ENCODE measurements at regions of chr4 and their contacts with region 1.

Region 1: GRCh38 chr4:83535520-83536361 is at the start of gene GPAT3:
- DNase-seq: peak; percentile 77 to 84
- ATAC-seq: peak; percentile 83 to 96 (median 89)
- H3K4me3 ChIP-seq: peak within 1 kb of the TSS; percentile 51 to 86 (median 74)
- H3K27ac ChIP-seq: peak within 1 kb of the TSS; percentile 68 to 96 (median 90)
- H3K4me1 ChIP-seq: peaks cover 0 to 31% (median 13%) of the 10 kb centered on the region in 9 donors
- H3K27me3 ChIP-seq: peaks cover 0 to 35% (median 6%) of the 10 kb centered on the region in 7 donors
- CTCF ChIP-seq: no peak
- total RNA-seq, gene GPAT3: 34.2 to 82.6 (median 52.8) TPM

Region 2: DNA sequence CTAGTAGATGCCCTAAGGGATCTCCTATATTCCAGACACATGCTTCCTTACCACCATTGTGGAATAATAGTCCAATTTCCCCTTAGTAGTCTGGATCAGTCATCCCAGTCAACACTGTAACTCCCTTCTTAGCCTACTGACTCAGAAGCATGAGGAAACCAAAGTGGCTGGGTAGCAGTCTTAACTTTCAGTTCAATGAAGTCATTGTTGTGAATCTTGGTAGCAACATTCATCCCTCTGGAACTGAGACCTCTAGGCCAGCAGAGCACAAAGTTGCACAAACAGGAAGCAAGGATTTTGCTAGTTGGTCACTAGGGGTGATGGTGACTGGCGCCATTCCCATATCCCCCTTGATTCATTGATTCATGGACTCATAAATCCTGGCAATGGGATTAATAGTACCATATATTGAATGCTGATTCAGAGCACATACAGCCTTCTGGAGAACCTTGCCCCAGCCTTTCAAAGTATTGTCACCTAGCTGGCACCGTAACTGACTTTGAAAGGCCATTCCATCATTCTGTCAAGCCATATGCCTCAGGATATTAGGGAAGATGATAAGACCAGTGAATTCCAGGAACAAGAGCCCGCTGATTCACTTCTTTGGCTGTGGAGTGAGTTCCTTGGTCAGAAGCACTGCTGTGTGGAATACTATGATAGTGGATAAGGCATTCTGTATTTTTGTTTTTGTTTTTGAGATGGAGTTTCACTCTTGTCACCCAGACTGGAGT is 19.5 kb before region 1 on chr4:
- intact Hi-C with region 1: no loop called
- DNase-seq: no peak
- ATAC-seq: peak in 2 of 8 donors; percentile 12 to 72
- H3K4me3 ChIP-seq: no peak overlapping the region
- H3K27ac ChIP-seq: no peak overlapping the region
- H3K4me1 ChIP-seq: no peaks in the 10 kb centered on the region
- H3K27me3 ChIP-seq: no peaks in the 10 kb centered on the region
- CTCF ChIP-seq: no peak

Region 3: DNA sequence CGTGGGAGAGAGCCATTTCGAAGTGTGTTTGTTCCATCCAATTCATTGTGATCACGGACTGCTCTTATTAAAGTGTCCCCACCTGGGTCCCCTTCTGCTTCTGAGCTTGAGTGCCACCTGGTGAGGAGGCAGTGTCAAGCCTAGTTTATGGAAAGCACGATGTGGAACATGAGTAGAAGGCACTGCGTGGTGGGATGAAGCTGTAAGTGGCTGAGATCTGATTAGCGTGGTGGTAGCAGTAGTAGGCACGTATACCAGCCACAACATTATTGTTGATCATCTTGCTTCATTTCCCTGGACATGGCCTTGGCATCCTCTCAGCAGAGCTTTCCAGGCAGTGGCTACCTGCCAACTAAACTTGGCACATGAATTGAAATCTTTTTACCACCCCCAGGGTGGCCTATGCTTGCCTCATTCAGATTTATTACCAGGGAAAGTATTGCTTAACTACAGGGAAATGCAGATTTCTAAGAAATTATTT is 46.6 kb after region 1 on chr4:
- intact Hi-C with region 1: loop called in 3 of 10 experiments (anchors 5 kb)
- DNase-seq: peak; percentile 16 to 26
- ATAC-seq: peak; percentile 64 to 92 (median 88)
- H3K4me3 ChIP-seq: no peak overlapping the region
- H3K27ac ChIP-seq: peak overlapping the region in 5 of 10 donors; percentile 14 to 44 (median 41)
- H3K4me1 ChIP-seq: peaks cover 0 to 36% (median 11%) of the 10 kb centered on the region in 9 donors
- H3K27me3 ChIP-seq: no peaks in the 10 kb centered on the region
- CTCF ChIP-seq: peak in 3 of 9 donors; percentile 23 to 26 (median 26)

Region 4: DNA sequence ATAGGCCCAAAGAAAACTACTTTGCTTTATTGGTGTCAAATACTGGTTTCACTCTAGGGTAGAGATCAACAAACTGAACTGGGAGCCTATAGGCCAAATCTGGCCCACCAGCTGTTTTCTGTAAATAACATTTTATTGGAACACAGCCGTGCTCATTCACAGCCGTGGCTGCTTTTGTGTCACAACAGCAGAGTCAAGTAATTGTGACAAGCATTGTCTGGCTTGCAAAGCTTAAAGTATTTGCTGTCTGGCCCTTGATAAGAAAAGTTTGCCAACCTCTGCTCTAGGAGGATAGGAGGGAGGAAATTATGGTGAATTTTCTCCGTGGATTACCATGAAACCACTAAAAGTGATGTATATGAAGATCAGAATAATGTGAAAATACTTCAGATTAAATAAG is 53.5 kb after region 1 on chr4:
- intact Hi-C with region 1: loop called in 2 of 10 experiments (anchors 5 kb)
- DNase-seq: no peak
- ATAC-seq: peak in 1 of 8 donors; percentile 26
- H3K4me3 ChIP-seq: no peak overlapping the region
- H3K27ac ChIP-seq: peak overlapping the region in 1 of 10 donors; percentile 1
- H3K4me1 ChIP-seq: peaks cover 0 to 21% (median 7%) of the 10 kb centered on the region in 9 donors
- H3K27me3 ChIP-seq: no peaks in the 10 kb centered on the region
- CTCF ChIP-seq: no peak

Region 5: DNA sequence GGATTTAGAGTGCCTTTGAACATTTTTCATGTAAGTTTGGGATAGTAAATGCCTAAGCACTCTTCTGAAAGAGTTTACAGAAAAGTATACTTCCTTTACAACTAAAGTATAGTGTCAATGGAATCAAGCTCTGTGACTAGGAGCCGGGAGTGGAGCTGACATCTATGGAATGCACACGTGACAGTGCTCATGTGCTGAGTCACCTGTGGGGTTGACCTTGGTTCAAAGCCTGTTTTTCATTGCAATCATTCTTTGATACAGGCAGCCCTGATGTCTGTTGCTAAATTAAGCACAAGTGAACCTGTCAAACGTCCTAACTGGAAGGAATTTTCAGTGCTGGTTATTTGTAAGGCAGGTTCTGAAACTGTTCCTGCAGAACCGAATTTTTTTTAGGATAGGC is 82.7 kb after region 1 on chr4:
- intact Hi-C with region 1: loop called in 1 of 10 experiments (anchors 5 kb)
- DNase-seq: peak in 1 of 2 donors; percentile 57
- ATAC-seq: peak; percentile 83 to 99 (median 94)
- H3K4me3 ChIP-seq: no peak overlapping the region
- H3K27ac ChIP-seq: peak overlapping the region; percentile 46 to 91 (median 82)
- H3K4me1 ChIP-seq: peaks cover 0 to 31% (median 13%) of the 10 kb centered on the region in 9 donors
- H3K27me3 ChIP-seq: no peaks in the 10 kb centered on the region
- CTCF ChIP-seq: no peak

Region 6: DNA sequence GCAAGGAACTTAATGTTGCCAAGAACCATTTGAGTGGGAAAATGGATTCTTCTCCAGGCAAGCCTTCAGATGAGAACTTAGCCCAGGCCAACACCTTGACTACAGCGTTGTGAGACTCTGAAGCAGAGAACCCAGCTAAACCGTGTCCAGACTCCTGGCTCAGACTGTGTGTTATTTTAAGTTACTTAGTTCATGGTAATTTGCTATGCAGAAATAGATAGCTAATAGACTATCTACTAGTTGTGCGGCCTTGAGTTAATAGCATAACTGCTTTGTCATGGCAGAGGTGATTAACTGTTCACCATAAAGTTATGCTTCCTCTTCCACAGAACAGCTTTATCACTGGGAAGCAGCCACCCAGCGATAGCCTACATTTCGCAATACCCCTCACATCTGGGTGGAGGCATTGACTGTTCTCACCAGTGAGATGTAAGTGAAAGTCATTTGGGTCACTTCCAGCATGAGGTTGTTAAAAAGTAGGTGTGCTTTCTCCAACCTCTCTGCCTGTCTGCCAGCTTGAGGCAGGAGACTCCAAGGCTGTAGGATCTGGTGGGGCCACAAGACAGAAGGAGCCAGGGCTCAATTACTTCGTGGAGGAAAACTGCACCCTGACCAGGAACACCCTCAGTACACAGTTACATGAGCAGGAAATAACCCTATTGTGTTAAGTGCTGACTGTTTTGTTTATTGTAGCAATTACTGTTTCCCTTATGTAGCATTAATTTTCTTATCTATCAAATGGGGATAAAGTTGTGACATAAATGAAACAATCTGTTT is 94.4 kb after region 1 on chr4:
- intact Hi-C with region 1: loop called in 3 of 10 experiments (anchors 5 kb)
- DNase-seq: no peak
- ATAC-seq: peak in 7 of 8 donors; percentile 20 to 72 (median 51)
- H3K4me3 ChIP-seq: no peak overlapping the region
- H3K27ac ChIP-seq: peak overlapping the region in 5 of 10 donors; percentile 3 to 49 (median 29)
- H3K4me1 ChIP-seq: peaks cover 3 to 45% (median 17%) of the 10 kb centered on the region in 9 donors
- H3K27me3 ChIP-seq: no peaks in the 10 kb centered on the region
- CTCF ChIP-seq: no peak

Region 7: GRCh38 chr4:83662204-83662603 is 126.5 kb after region 1 on chr4:
- intact Hi-C with region 1: no loop called
- DNase-seq: no peak
- ATAC-seq: no peak
- H3K4me3 ChIP-seq: no peak overlapping the region
- H3K27ac ChIP-seq: no peak overlapping the region
- H3K4me1 ChIP-seq: no peaks in the 10 kb centered on the region
- H3K27me3 ChIP-seq: peaks cover 0 to 3% (median 0%) of the 10 kb centered on the region in 7 donors
- CTCF ChIP-seq: no peak